MCF 10A (cell line): ENCODE measurements at regions of chr3 and their contacts with region 1.

Region 1: DNA sequence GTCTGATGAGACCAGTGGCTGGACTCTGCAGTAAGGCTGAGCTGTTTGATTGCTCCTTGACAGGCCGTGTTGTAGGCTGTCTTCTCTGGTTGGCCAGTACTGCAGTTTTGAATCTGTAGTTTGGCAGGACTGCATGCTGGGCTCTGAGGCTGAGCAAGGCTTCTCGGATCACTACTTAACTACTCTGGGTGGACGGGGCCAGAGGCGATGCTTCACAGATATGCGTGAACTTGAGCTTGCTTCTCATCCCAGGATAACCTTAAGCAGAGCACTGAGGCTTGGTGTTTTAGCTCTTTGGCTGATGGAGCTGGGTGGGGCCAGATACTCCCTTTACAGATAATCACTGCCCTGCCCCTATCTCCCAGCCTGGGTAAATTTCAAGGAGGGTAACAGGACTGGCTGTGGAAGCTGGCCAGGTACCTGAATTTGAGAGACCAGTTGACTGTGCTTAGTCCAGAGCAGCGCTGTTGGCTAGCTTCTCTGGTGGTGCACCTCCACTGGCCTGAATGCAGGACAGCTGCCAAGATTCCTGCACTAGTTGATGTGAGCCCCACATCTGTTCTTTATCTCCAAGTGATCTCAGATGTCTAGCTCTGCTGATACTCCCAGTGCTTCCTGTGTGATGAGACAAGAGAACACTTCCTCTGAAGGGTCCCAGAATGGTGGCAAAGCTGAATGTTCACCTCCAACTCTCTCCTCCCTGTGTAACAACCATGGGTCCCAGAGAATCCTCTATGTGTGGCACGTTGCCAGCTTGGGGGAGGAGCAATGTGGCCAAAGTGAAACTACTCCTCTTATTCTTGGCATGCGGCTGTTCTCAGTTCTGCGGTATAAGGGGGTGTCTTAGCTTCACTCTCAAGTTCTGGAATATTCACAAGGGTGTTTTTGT is 37.9 kb downstream of the RPL39L start:
- DNase-seq: peak; percentile 78
- H3K4me3 Mint-ChIP-seq: peak overlapping the region; percentile 73
- H3K27ac Mint-ChIP-seq: peak overlapping the region; percentile 85
- H3K4me1 Mint-ChIP-seq: peaks cover 8% of the 10 kb centered on the region
- H3K27me3 Mint-ChIP-seq: no peaks in the 10 kb centered on the region
- CTCF ChIP-seq: no peak

Region 2: DNA sequence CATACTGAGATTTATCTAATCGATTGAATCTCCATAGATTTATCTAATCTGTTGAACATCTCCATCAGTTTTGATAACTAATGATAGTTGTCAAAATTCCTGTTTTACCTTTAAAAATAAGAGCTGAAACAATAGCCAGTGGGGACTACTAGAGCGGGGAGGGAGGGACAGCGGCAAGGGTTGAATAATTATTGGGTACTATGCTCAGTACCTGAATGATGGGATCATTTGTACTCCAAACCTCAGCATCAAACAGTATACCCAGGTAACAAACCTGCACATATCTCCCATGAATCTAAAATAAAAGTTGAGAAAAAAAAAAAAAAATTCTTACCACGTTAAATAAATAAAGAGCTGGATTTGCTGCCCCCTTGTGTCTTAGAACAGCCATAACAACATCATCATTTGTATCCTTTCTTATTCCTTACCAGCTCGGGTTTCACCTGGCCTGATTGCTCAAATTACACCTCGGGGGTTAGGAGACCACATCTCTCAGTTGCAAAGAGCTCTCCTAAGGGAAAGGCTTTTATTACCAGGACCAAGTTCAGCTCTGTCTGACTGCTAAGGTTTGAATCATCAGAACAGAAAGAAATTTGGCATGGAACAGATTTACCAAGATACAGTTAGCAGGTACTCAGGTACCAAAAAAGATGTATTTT is 63.6 kb after region 1 on chr3:
- CTCF ChIA-PET with region 1: interaction called, 41 read pairs
- POLR2A ChIA-PET with region 1: no interaction called
- intact Hi-C with region 1: no loop called
- DNase-seq: peak; percentile 80
- H3K4me3 Mint-ChIP-seq: no peak overlapping the region
- H3K27ac Mint-ChIP-seq: no peak overlapping the region
- H3K4me1 Mint-ChIP-seq: peaks cover 10% of the 10 kb centered on the region
- H3K27me3 Mint-ChIP-seq: peaks cover 15% of the 10 kb centered on the region
- CTCF ChIP-seq: peak; percentile 54

Region 3: DNA sequence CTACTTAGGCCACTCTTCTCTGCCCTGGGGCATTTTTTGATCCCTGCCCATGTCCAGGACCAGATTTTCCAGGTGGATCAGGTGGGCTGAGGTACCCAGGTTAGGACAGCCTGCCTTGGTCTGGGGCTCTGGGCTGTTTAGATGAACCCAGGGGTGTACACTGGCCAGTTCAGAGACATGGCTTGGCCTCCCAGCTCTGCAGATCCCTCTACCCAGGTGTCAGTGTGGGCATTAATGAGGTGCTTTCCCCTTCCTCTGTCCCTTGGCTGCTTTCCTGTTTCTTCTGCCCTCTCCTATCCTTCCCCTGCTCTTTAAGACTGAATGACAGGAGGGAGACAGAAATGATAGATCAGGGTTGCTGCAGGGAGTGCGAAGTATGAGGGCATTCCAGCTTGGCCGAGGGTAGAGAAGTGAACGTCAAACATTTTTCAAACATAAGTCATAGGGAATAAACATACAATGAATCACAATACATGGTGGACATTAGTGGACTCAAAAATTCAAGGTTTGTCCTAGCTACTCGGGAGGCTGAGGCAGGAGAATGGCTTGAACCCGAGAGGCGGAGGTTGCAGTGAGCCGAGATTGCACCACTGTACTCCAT is 126.3 kb after region 1 on chr3:
- CTCF ChIA-PET with region 1: no interaction called
- POLR2A ChIA-PET with region 1: no interaction called
- intact Hi-C with region 1: no loop called
- DNase-seq: peak; percentile 45
- H3K4me3 Mint-ChIP-seq: no peak overlapping the region
- H3K27ac Mint-ChIP-seq: no peak overlapping the region
- H3K4me1 Mint-ChIP-seq: peaks cover 27% of the 10 kb centered on the region
- H3K27me3 Mint-ChIP-seq: no peaks in the 10 kb centered on the region
- CTCF ChIP-seq: no peak

Region 4: GRCh38 chr3:187406927-187407326 is 305.5 kb after region 1 on chr3:
- CTCF ChIA-PET with region 1: no interaction called
- POLR2A ChIA-PET with region 1: no interaction called
- intact Hi-C with region 1: no loop called
- DNase-seq: no peak
- H3K4me3 Mint-ChIP-seq: no peak overlapping the region
- H3K27ac Mint-ChIP-seq: no peak overlapping the region
- H3K4me1 Mint-ChIP-seq: peaks cover 9% of the 10 kb centered on the region
- H3K27me3 Mint-ChIP-seq: peaks cover 14% of the 10 kb centered on the region
- CTCF ChIP-seq: no peak